Lower leg skin (tissue), 4 donors: ENCODE measurements at regions of chr3 and their contacts with region 1.

Region 1: DNA sequence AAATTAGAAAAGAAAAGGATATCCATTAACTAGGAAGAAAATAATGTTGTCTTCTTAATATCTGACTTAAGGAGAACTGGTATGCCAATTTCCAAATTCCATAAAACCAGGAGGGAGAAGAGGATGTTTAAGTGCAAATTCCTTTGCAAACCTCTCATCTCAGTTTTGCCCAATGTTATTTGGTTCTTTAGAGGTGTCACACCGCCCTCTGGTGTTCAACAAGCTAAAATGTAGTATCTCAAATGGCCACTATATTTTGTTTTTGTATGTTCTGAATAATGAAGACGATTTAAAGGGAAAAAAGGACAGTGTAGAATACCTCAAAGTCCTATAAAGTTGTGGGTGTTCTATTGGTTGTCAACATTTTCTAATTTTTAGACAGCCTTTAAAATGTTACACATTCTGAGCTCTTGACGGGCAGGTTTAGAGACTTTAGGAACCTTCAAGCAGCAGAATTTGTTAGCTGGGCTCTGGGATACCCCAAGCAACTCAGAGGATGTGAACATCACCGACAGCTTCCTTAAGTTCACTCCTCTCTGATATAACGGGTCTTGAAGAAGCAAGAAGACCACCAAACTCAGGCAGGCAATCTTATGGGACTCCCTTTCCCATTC is 458.3 kb downstream of the MFSD1 start:
- DNase-seq: peak in 1 of 2 donors; percentile 29
- H3K4me3 ChIP-seq: no peak overlapping the region
- CTCF ChIP-seq: no peak
- POLR2A ChIP-seq: no peak

Region 2: DNA sequence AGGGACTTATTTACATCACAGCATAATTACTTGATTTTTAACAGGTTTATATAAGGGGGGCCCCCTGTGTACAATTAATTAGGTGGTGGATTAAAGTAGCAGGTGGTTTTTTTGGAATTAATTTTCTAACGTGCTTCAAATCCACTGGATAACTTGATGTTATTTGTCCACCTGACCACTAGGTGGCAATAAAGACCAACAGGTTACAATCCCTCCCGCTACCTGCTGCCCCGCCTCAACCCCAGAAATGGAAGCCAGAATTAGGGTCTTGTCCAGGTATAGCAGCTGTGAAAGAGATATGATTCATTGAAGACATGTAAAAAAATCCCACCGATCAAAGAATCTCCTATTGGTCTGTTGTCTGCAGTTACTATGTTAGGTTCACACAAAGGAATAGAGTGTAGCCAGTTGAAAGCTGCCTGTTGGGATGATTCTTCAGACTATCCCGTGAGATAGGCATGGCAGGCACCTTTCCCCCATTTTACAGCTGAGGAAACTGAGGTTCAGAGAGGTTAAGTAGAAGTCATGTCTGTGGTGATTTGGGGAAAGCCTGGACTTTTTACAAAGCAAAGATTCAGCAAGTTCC is 414.3 kb before region 1 on chr3:
- intact Hi-C with region 1: loop called (anchors 5 kb)
- DNase-seq: no peak
- H3K4me3 ChIP-seq: no peak overlapping the region
- CTCF ChIP-seq: no peak
- POLR2A ChIP-seq: no peak

Region 3: DNA sequence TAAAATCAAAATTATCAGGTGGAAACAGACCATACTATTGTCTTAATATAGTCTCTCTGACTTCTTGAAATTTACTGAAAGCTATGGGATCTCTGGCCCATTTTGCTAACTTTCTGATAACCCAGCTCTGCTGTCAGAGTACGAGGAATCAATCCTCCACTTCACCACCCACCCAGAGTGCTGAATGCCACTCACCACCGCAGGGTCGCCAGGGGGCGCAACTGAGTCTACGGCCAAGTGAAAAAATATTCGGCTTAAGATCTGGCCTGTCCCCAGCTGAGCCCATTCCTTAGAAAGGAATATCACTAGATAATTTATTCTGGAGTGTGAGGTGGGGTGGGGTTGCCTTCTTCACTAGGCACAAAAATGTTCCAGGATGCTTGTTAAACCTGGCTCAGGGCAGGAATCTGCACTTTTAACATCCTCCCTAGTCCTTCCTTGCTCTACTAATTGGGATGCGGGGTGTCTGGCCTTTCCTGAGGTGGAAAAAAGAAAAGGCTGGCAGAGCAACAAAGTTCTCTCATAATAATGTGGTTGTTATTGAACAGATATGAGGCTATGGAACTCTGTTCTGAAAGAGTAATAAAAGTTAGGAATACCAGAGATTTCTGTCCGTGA is 62.3 kb after region 1 on chr3:
- intact Hi-C with region 1: no loop called
- DNase-seq: no peak
- H3K4me3 ChIP-seq: no peak overlapping the region
- CTCF ChIP-seq: no peak
- POLR2A ChIP-seq: no peak

Region 4: DNA sequence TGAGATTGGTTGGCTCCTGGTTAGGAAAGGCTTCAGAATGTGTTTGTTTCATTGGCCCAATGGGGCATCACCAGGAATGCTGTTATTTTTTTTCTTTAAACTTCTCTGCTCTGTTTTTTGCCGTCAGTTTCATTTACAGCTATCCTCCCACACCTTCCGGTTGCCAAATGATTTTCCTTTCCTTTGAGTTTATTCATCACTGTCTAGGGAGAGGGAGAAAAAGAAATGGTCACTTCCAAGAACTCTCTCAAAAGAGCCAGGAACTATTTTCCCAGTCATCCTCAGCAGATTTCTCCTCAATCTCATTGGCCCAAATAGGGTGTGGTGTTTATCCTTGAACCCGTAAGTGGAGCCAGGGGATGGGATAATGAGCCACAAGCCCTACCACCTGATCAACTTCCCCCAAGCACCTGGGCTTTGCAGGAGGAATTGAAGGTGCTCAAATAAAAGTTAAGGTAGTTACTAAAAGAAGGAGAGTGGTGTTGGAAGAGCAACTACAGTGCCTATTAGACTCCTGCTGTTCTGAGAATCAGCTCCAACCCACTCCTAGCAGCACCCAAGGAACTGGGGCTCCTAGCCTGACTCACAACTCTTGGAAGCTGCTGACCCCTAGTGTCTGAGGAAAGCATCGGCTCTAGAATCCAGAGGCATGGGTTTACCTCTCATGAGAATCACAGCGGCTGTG is 544.7 kb after region 1 on chr3:
- intact Hi-C with region 1: loop called (anchors 10 kb)
- DNase-seq: peak in 1 of 2 donors; percentile 56
- H3K4me3 ChIP-seq: no peak overlapping the region
- CTCF ChIP-seq: peak in 1 of 3 donors; percentile 63
- POLR2A ChIP-seq: no peak

Region 5: DNA sequence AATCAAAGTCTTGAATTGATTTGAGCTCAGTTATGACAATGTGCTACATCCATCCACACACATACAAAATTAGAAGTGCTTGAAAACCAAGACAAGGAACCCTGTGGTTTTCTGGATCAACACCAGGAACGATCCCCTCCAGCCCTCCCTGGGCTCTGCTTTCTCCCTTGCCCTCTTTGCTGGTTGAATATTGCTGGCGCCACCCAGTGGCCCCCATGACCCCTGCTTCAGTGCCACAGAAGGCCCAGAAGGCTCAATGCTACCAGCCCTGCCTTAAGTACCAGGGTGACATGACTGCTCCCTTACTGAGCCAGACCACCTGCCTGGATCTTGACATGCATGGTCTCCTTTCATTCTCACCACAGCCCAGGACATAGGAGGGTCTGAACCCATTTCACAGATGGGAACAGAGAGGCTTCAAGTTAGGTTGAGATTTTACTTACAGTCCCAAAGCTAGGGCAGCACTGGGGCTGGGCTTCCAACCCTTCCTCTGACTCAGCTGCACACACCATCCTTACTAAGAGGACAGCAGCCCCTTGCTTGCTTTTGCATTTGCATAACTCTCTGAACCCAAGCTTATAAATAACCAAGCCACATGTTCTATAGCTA is 743.5 kb after region 1 on chr3:
- intact Hi-C with region 1: loop called (anchors 2 kb)
- DNase-seq: peak in 1 of 2 donors; percentile 72
- H3K4me3 ChIP-seq: no peak overlapping the region
- CTCF ChIP-seq: no peak
- POLR2A ChIP-seq: no peak